B cell (primary cell): ENCODE measurements at regions of chr3 and their contacts with region 1.

Region 1: GRCh38 chr3:49723628-49724551 is at the start of gene GMPPB:
- DNase-seq: peak; percentile 97
- ATAC-seq: peak; percentile 78
- H3K4me3 ChIP-seq: peak within 1 kb of the TSS; percentile 63 to 99 (median 92)
- H3K4me3 Mint-ChIP-seq: peak within 1 kb of the TSS; percentile 96
- H3K27ac ChIP-seq: peak within 1 kb of the TSS; percentile 100
- H3K27ac Mint-ChIP-seq: peak within 1 kb of the TSS; percentile 97
- H3K4me1 ChIP-seq: peaks cover 27 to 59% of the 10 kb centered on the region in 2 donors
- H3K4me1 Mint-ChIP-seq: peaks cover 59% of the 10 kb centered on the region
- H3K27me3 ChIP-seq: no peaks in the 10 kb centered on the region
- H3K27me3 Mint-ChIP-seq: no peaks in the 10 kb centered on the region
- CTCF ChIP-seq: no peak
- total RNA-seq, gene GMPPB: 30.0 and 31.4 TPM in 2 replicates

Region 2: GRCh38 chr3:48151058-48151806 is 1572.7 kb before region 1 on chr3:
- CTCF ChIA-PET with region 1: no interaction called
- POLR2A ChIA-PET with region 1: no interaction called
- intact Hi-C with region 1: no loop called
- DNase-seq: peak; percentile 67
- ATAC-seq: peak; percentile 81
- H3K4me3 ChIP-seq: no peak overlapping the region
- H3K4me3 Mint-ChIP-seq: no peak overlapping the region
- H3K27ac ChIP-seq: no peak overlapping the region
- H3K27ac Mint-ChIP-seq: no peak overlapping the region
- H3K4me1 ChIP-seq: no peaks in the 10 kb centered on the region
- H3K4me1 Mint-ChIP-seq: no peaks in the 10 kb centered on the region
- H3K27me3 ChIP-seq: no peaks in the 10 kb centered on the region
- H3K27me3 Mint-ChIP-seq: no peaks in the 10 kb centered on the region
- CTCF ChIP-seq: peak; percentile 70

Region 3: GRCh38 chr3:49856181-49857005 is 132.5 kb after region 1 on chr3 and contains the start of gene TRAIP:
- CTCF ChIA-PET with region 1: no interaction called
- POLR2A ChIA-PET with region 1: no interaction called
- intact Hi-C with region 1: loop called (anchors 1 kb)
- DNase-seq: peak; percentile 98
- ATAC-seq: peak; percentile 100
- H3K4me3 ChIP-seq: peak within 1 kb of the TSS; percentile 53 to 91 (median 69)
- H3K4me3 Mint-ChIP-seq: peak within 1 kb of the TSS; percentile 91
- H3K27ac ChIP-seq: peak within 1 kb of the TSS; percentile 56 to 59
- H3K27ac Mint-ChIP-seq: peak within 1 kb of the TSS; percentile 90
- H3K4me1 ChIP-seq: peaks cover 10 to 15% of the 10 kb centered on the region in 2 donors
- H3K4me1 Mint-ChIP-seq: peaks cover 11% of the 10 kb centered on the region
- H3K27me3 ChIP-seq: peaks cover 0 to 3% (median 0%) of the 10 kb centered on the region in 4 experiments
- H3K27me3 Mint-ChIP-seq: no peaks in the 10 kb centered on the region
- CTCF ChIP-seq: no peak
- total RNA-seq, gene TRAIP: 8.7 and 9.9 TPM in 2 replicates